PC-9 (cell line): ENCODE measurements at regions of chr9 and their contacts with region 1.

Region 1: GRCh38 chr9:30713243-30713642 is 1671.2 kb upstream of the ACO1 start:
- DNase-seq: no peak
- H3K4me3 ChIP-seq: no peak overlapping the region
- H3K27ac ChIP-seq: no peak overlapping the region
- H3K4me1 ChIP-seq: no peaks in the 10 kb centered on the region
- H3K27me3 ChIP-seq: no peaks in the 10 kb centered on the region
- CTCF ChIP-seq: no peak

Region 2: DNA sequence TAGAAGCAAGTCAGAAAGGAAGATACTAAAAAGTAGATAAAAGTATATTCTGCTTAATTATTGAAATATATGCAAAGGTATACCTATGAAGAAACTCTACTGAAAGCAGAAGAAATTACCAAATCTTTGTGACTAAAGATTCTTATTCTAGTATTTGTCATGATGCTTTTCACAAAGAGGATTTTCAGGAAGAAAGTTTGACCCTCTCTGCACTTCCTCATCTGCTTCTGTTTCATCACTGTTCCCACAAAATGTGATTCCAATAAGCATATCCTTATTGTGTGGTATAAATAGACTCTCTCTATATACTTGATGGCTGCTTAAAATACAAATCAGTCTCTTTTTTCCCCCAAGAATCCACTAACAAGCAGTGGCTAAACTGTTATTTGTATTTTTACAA is 468.4 kb before region 1 on chr9:
- CTCF ChIA-PET with region 1: no interaction called
- POLR2A ChIA-PET with region 1: no interaction called
- intact Hi-C with region 1: no loop called
- DNase-seq: no peak
- H3K4me3 ChIP-seq: no peak overlapping the region
- H3K27ac ChIP-seq: no peak overlapping the region
- H3K4me1 ChIP-seq: no peaks in the 10 kb centered on the region
- H3K27me3 ChIP-seq: no peaks in the 10 kb centered on the region
- CTCF ChIP-seq: no peak

Region 3: DNA sequence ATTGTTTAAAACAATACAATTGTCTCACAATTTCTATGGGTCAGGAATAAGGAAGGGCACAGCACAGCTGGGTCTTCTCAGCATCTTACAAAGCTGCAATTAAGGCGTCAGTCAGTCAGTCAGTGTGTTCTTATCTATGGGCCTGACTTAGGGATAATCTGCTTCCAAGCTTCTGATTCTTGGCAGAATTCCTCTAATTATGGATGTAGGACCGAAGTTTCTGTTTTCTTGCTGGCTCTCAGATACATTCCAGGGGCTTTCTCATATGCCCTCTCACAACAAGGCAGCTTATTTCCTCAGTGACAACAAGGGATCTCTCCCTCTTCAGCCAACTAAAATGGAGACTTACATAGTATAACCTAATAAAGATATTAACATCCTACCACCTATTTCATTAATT is 254.1 kb before region 1 on chr9:
- CTCF ChIA-PET with region 1: no interaction called
- POLR2A ChIA-PET with region 1: no interaction called
- intact Hi-C with region 1: no loop called
- DNase-seq: no peak
- H3K4me3 ChIP-seq: no peak overlapping the region
- H3K27ac ChIP-seq: no peak overlapping the region
- H3K4me1 ChIP-seq: no peaks in the 10 kb centered on the region
- H3K27me3 ChIP-seq: no peaks in the 10 kb centered on the region
- CTCF ChIP-seq: no peak

Region 4: DNA sequence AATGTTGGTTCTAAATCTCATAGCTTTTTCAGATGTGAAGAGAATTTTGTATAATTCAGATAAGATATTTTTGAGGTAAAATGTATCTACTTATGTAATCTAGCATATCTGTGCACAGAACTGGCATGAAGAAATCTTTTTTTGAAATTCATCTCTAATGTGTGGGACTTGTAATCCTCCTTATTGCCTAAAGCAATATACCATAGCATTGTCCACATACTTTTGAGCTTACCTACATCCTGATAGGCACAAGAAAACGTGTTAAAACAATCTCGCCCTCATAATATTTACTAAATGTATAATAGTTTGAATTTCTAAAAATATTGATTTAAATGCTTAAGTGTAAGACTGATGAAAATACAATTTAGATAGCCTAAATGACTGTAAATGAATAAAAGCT is 15.3 kb before region 1 on chr9:
- CTCF ChIA-PET with region 1: interaction called, 13 read pairs
- POLR2A ChIA-PET with region 1: no interaction called
- intact Hi-C with region 1: no loop called
- DNase-seq: no peak
- H3K4me3 ChIP-seq: no peak overlapping the region
- H3K27ac ChIP-seq: no peak overlapping the region
- H3K4me1 ChIP-seq: no peaks in the 10 kb centered on the region
- H3K27me3 ChIP-seq: no peaks in the 10 kb centered on the region
- CTCF ChIP-seq: no peak

Region 5: GRCh38 chr9:30758726-30759446 is 45.6 kb after region 1 on chr9:
- CTCF ChIA-PET with region 1: no interaction called
- POLR2A ChIA-PET with region 1: no interaction called
- intact Hi-C with region 1: no loop called
- DNase-seq: no peak
- H3K4me3 ChIP-seq: no peak overlapping the region
- H3K27ac ChIP-seq: no peak overlapping the region
- H3K4me1 ChIP-seq: no peaks in the 10 kb centered on the region
- H3K27me3 ChIP-seq: no peaks in the 10 kb centered on the region
- CTCF ChIP-seq: no peak

Region 6: GRCh38 chr9:31078175-31078574 is 364.9 kb after region 1 on chr9:
- CTCF ChIA-PET with region 1: no interaction called
- POLR2A ChIA-PET with region 1: no interaction called
- intact Hi-C with region 1: no loop called
- DNase-seq: no peak
- H3K4me3 ChIP-seq: no peak overlapping the region
- H3K27ac ChIP-seq: no peak overlapping the region
- H3K4me1 ChIP-seq: no peaks in the 10 kb centered on the region
- H3K27me3 ChIP-seq: no peaks in the 10 kb centered on the region
- CTCF ChIP-seq: no peak